Activated CD8-positive, alpha-beta memory T cell treated with anti-CD3 and anti-CD28 coated beads, Interleukin-2, amount 10 ng/mL, durations not matched to agents 7 days and 5 days (primary cell): ENCODE measurements at regions of chr13 and their contacts with region 1.

Region 1: GRCh38 chr13:30132623-30133553 is 174.5 kb downstream of the KATNAL1 start:
- DNase-seq: peak; percentile 98
- ATAC-seq: peak; percentile 99
- H3K4me3 Mint-ChIP-seq: no peak overlapping the region
- H3K27ac Mint-ChIP-seq: peak overlapping the region; percentile 71
- H3K4me1 Mint-ChIP-seq: peaks cover 15% of the 10 kb centered on the region
- H3K27me3 Mint-ChIP-seq: no peaks in the 10 kb centered on the region

Region 2: GRCh38 chr13:29859971-29860370 is 272.9 kb before region 1 on chr13:
- CTCF ChIA-PET with region 1: no interaction called
- DNase-seq: no peak
- ATAC-seq: no peak
- H3K4me3 Mint-ChIP-seq: no peak overlapping the region
- H3K27ac Mint-ChIP-seq: no peak overlapping the region
- H3K4me1 Mint-ChIP-seq: peaks cover 11% of the 10 kb centered on the region
- H3K27me3 Mint-ChIP-seq: no peaks in the 10 kb centered on the region

Region 3: GRCh38 chr13:30165796-30166195 is 32.9 kb after region 1 on chr13:
- CTCF ChIA-PET with region 1: interaction called, 185 read pairs
- DNase-seq: no peak
- ATAC-seq: no peak
- H3K4me3 Mint-ChIP-seq: no peak overlapping the region
- H3K27ac Mint-ChIP-seq: no peak overlapping the region
- H3K4me1 Mint-ChIP-seq: peaks cover 7% of the 10 kb centered on the region
- H3K27me3 Mint-ChIP-seq: peaks cover 2% of the 10 kb centered on the region

Region 4: GRCh38 chr13:30346153-30346788 is 213.4 kb after region 1 on chr13:
- CTCF ChIA-PET with region 1: interaction called, 12 read pairs
- DNase-seq: peak; percentile 93
- ATAC-seq: peak; percentile 91
- H3K4me3 Mint-ChIP-seq: peak overlapping the region; percentile 41
- H3K27ac Mint-ChIP-seq: peak overlapping the region; percentile 77
- H3K4me1 Mint-ChIP-seq: peaks cover 34% of the 10 kb centered on the region
- H3K27me3 Mint-ChIP-seq: no peaks in the 10 kb centered on the region

Region 5: DNA sequence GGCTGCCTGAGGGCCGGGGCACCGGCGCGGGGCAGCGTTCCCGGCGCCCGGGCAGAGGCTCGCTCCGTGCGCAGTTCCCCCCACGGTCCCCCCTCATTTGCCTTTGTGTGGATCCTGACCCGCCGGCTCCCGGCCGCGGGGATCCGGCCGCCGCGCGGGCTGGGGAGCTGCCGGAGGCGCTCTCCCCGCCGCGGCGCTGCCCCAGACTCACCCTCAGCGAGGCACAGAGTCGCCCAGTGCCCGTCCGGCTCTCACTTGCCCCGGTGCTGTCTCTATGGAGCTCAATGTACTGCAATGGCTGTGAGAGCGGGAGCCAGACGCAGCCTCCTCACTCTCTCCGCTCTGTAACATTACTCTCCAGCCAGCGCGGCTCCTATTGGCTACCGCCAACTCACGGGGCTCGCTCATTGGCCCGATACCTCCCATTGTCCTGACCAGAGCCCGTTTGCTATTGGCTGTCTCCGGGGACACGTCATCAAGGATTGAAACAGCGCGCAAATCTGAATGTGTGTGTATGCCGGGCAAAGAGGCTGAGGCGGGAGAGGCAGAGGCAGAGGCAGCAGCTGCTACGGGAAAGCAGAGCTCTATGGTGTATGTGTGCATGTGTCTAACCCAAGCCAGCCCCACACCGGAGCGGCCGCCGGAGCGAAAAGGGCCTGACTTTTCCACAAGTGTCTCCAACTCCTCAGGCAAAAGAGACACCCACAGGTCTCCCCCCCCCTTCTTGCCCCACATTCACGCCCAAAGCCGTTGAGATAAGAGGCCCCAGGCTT is 332.9 kb after region 1 on chr13 and contains the start of gene HMGB1:
- CTCF ChIA-PET with region 1: interaction called, 17 read pairs
- DNase-seq: peak; percentile 100
- ATAC-seq: peak; percentile 93
- H3K4me3 Mint-ChIP-seq: peak within 1 kb of the TSS; percentile 88
- H3K27ac Mint-ChIP-seq: peak within 1 kb of the TSS; percentile 96
- H3K4me1 Mint-ChIP-seq: peaks cover 28% of the 10 kb centered on the region
- H3K27me3 Mint-ChIP-seq: no peaks in the 10 kb centered on the region
- total RNA-seq, gene HMGB1: 716 to 739 TPM